GM12878 (cell line): ENCODE measurements at regions of chr17 and their contacts with region 1.

Region 1: GRCh38 chr17:29931231-29931932 is 1.4 kb upstream of the SSH2 start:
- DNase-seq: peak; percentile 90
- ATAC-seq: peak; percentile 86
- H3K4me3 ChIP-seq: peak overlapping the region; percentile 96; the same call in 1 of the 2 replicates
- H3K27ac ChIP-seq: no peak overlapping the region
- H3K4me1 ChIP-seq: peaks cover 4% of the 10 kb centered on the region
- H3K27me3 ChIP-seq: no peaks in the 10 kb centered on the region
- CTCF ChIP-seq: peak; percentile 83 to 95 (median 94); a peak in 5 of 6 replicates
- EP300 ChIP-seq: peak; percentile 19 to 43; a peak in 2 of 4 replicates
- POLR2A ChIP-seq: no peak
- RAD21 ChIP-seq: peak; percentile 93

Region 2: GRCh38 chr17:29078183-29079045 is 853.0 kb before region 1 on chr17:
- CTCF ChIA-PET with region 1: no interaction called
- POLR2A ChIA-PET with region 1: no interaction called
- RAD21 ChIA-PET with region 1: no interaction called
- SMC1A ChIA-PET with region 1: no interaction called
- in situ Hi-C with region 1: no loop called
- intact Hi-C with region 1: no loop called
- DNase-seq: no peak
- ATAC-seq: no peak
- H3K4me3 ChIP-seq: no peak overlapping the region
- H3K27ac ChIP-seq: no peak overlapping the region
- H3K4me1 ChIP-seq: no peaks in the 10 kb centered on the region
- H3K27me3 ChIP-seq: no peaks in the 10 kb centered on the region
- CTCF ChIP-seq: no peak
- EP300 ChIP-seq: no peak
- POLR2A ChIP-seq: no peak
- RAD21 ChIP-seq: no peak

Region 3: DNA sequence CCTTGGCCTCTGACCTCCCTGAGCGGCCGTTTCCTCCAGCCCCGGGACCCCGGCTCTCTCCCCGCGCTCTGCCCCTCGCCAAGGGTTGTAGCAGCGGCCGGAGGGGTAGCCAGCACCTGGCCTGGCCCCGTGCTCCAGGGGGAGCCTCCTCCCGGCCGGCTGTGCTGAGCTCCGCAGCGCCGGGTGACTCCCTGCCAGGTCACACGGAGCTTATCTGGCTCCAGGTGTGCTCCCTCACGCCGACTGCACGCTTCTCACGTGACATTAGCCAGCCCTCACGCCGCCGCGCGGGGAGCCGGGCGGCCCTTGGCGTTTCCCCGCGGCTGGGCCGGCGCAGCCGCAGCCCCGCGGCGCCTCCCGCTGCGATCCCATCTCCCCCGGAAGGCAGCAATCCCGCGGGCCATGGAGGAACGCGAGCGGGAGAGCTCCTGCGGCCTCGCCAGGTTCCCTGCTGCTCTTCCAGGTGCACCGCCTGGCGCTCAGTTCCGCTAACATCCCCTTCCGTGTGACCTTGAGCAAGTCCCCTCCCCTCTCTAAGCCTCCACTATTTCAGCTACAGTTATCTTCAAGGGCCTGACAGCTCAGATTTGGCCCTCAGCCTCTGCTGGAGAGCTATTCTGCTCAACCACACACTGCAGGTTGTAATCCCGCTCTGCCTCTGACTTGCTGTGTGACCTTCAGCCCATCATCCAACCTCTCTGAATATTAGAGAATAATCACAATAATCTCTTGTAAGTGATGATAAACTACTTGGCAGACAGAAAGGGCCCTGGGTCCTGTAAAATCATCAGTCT is 754.6 kb before region 1 on chr17:
- CTCF ChIA-PET with region 1: no interaction called
- POLR2A ChIA-PET with region 1: no interaction called
- RAD21 ChIA-PET with region 1: no interaction called
- SMC1A ChIA-PET with region 1: no interaction called
- in situ Hi-C with region 1: no loop called
- intact Hi-C with region 1: no loop called
- DNase-seq: no peak
- ATAC-seq: peak; percentile 77
- H3K4me3 ChIP-seq: peak overlapping the region; percentile 68; the same call in 1 of the 2 replicates
- H3K27ac ChIP-seq: peak overlapping the region; percentile 63
- H3K4me1 ChIP-seq: peaks cover 17% of the 10 kb centered on the region
- H3K27me3 ChIP-seq: no peaks in the 10 kb centered on the region
- CTCF ChIP-seq: no peak
- EP300 ChIP-seq: no peak
- POLR2A ChIP-seq: peak; percentile 87
- RAD21 ChIP-seq: no peak

Region 4: DNA sequence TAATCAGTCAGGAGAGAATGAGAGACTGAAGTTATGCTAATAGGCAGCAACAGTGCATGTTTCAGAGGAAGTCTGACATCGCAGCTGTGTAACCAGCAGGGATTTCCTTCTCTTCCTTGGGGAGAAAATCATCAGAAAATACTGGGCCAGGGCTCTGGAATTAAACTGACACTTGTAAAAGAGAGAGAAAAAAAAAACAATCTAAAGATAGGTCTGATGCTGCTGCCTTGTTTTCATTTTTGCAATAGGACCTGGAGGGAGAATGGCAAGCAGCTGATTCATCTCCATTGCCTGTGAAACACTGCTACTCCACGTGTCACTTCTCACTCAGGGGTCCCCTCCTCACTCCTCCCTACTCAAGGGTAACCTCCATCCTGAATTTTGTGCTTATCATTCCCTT is 291.0 kb before region 1 on chr17:
- CTCF ChIA-PET with region 1: interaction called, 33 read pairs
- POLR2A ChIA-PET with region 1: interaction called, 4 read pairs
- RAD21 ChIA-PET with region 1: interaction called, 32 read pairs
- SMC1A ChIA-PET with region 1: interaction called, 18 read pairs
- in situ Hi-C with region 1: no loop called
- intact Hi-C with region 1: loop called (anchors 5 kb)
- DNase-seq: no peak
- ATAC-seq: no peak
- H3K4me3 ChIP-seq: no peak overlapping the region
- H3K27ac ChIP-seq: no peak overlapping the region
- H3K4me1 ChIP-seq: peaks cover 3% of the 10 kb centered on the region
- H3K27me3 ChIP-seq: no peaks in the 10 kb centered on the region
- CTCF ChIP-seq: no peak
- EP300 ChIP-seq: no peak
- POLR2A ChIP-seq: no peak
- RAD21 ChIP-seq: no peak

Region 5: GRCh38 chr17:29777663-29778062 is 153.7 kb before region 1 on chr17:
- CTCF ChIA-PET with region 1: interaction called, 14 read pairs
- POLR2A ChIA-PET with region 1: no interaction called
- RAD21 ChIA-PET with region 1: interaction called, 24 read pairs
- SMC1A ChIA-PET with region 1: interaction called, 5 read pairs
- in situ Hi-C with region 1: no loop called
- intact Hi-C with region 1: no loop called
- DNase-seq: no peak
- ATAC-seq: no peak
- H3K4me3 ChIP-seq: no peak overlapping the region
- H3K27ac ChIP-seq: no peak overlapping the region
- H3K4me1 ChIP-seq: no peaks in the 10 kb centered on the region
- H3K27me3 ChIP-seq: no peaks in the 10 kb centered on the region
- CTCF ChIP-seq: no peak
- EP300 ChIP-seq: no peak
- POLR2A ChIP-seq: no peak
- RAD21 ChIP-seq: no peak

Region 6: GRCh38 chr17:29825604-29826003 is 105.8 kb before region 1 on chr17:
- CTCF ChIA-PET with region 1: interaction called, 18 read pairs
- POLR2A ChIA-PET with region 1: interaction called, 8 read pairs
- RAD21 ChIA-PET with region 1: interaction called, 16 read pairs
- SMC1A ChIA-PET with region 1: interaction called, 9 read pairs
- in situ Hi-C with region 1: no loop called
- intact Hi-C with region 1: no loop called
- DNase-seq: no peak
- ATAC-seq: no peak
- H3K4me3 ChIP-seq: no peak overlapping the region
- H3K27ac ChIP-seq: no peak overlapping the region
- H3K4me1 ChIP-seq: no peaks in the 10 kb centered on the region
- H3K27me3 ChIP-seq: no peaks in the 10 kb centered on the region
- CTCF ChIP-seq: no peak
- EP300 ChIP-seq: no peak
- POLR2A ChIP-seq: no peak
- RAD21 ChIP-seq: no peak

Region 7: DNA sequence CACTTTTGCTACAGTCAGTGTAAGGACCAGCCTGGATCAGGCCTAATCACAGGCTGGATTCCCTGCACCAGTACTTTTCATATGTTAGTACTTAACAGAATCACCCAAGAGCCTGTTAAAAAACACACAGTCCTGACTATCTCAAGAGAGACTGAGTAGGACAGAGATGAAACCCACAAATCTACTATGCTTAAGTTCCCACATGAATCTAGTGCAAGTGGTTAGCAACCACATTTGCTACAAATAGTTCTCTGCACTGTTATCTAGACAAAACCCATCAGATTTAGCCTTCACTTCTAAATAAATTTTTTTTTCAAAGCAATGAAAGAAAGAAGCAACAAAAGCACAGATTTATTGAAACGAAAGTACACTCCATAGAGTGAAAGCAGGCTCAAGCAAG is 40.3 kb before region 1 on chr17:
- CTCF ChIA-PET with region 1: interaction called, 3 read pairs
- POLR2A ChIA-PET with region 1: no interaction called
- RAD21 ChIA-PET with region 1: interaction called, 10 read pairs
- SMC1A ChIA-PET with region 1: interaction called, 14 read pairs
- in situ Hi-C with region 1: no loop called
- intact Hi-C with region 1: no loop called
- DNase-seq: peak; percentile 12
- ATAC-seq: peak; percentile 27; the same call in 1 of the 3 replicates
- H3K4me3 ChIP-seq: no peak overlapping the region
- H3K27ac ChIP-seq: no peak overlapping the region
- H3K4me1 ChIP-seq: no peaks in the 10 kb centered on the region; the same call in 1 of the 2 replicates
- H3K27me3 ChIP-seq: no peaks in the 10 kb centered on the region
- CTCF ChIP-seq: no peak
- EP300 ChIP-seq: no peak
- POLR2A ChIP-seq: no peak
- RAD21 ChIP-seq: no peak

Region 8: DNA sequence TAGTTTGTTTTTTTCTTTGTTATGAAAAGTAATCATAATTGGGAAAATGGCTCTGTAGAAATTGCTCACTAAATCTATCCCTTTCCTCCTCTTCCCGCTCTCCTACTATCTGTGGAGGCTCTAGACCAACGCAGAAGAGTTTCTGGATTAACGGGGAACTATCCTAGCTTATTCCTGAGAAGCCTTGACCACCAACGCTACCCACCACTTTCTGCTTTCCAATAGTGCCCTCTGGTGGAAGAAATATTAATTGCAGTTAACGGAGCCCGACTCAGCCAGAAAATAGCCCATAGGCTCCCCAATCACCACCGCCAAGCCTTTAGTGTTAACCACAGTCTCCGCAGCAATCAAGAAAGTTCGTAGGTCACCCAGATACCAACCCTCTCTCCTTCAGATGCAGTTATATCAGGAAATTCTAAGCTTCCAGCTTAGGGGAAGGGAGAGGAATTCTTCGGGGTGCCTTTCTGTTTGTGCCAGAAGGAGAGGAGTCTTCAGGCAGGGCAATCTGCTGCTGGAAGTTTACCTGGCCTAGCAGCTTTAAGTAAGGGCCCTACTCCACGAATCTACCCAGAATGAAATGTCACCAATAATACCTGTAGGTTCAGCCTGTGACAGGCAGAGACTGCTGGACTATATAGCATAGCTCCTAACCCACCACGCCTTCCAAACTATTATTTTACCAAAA is 162.2 kb after region 1 on chr17:
- CTCF ChIA-PET with region 1: interaction called, 33 read pairs
- POLR2A ChIA-PET with region 1: interaction called, 3 read pairs
- RAD21 ChIA-PET with region 1: interaction called, 8 read pairs
- SMC1A ChIA-PET with region 1: interaction called, 14 read pairs
- in situ Hi-C with region 1: no loop called
- intact Hi-C with region 1: no loop called
- DNase-seq: peak; percentile 32
- ATAC-seq: peak; percentile 88
- H3K4me3 ChIP-seq: no peak overlapping the region
- H3K27ac ChIP-seq: no peak overlapping the region
- H3K4me1 ChIP-seq: peaks cover 3% of the 10 kb centered on the region; the same call in 1 of the 2 replicates
- H3K27me3 ChIP-seq: no peaks in the 10 kb centered on the region; a peak in 1 of 4 replicates
- CTCF ChIP-seq: peak; percentile 63 to 82 (median 70); a peak in 5 of 6 replicates
- EP300 ChIP-seq: no peak
- POLR2A ChIP-seq: no peak
- RAD21 ChIP-seq: peak; percentile 88